ENCODE measurements at regions of chrX and their contacts with region 1.

Region 1: DNA sequence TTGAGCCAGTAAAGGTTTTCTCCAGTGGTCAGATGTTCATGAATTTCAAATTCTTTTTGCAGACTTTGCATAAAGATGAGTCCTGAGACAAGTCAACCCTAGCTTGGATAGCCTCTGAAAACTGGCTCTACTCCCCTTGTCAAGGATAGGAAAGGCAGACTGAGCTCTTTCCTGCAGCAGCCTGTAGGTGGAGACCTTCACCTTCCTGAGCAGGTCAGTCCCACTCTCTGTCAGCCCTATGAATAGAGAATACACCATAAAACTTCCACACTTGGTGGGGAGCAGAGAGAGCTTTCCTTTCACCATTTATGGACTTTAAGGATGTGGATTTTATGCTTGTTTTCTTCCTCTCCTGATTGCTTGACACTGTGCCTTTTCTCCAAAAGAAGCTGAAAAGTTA is 41.9 kb downstream of the PCDH19 start:
- DNase-seq: no peak
- H3K4me3 ChIP-seq: no peak overlapping the region
- H3K27ac ChIP-seq: no peak overlapping the region
- H3K4me1 ChIP-seq: no peaks in the 10 kb centered on the region
- H3K27me3 ChIP-seq: no peaks in the 10 kb centered on the region
- CTCF ChIP-seq: peak in 1 of 6 experiments; percentile 15
- POLR2A ChIP-seq: no peak

Region 2: GRCh38 chrX:99833821-99834220 is 534.3 kb before region 1 on chrX:
- intact Hi-C with region 1: no loop called
- DNase-seq: no peak
- H3K4me3 ChIP-seq: no peak overlapping the region
- H3K27ac ChIP-seq: no peak overlapping the region
- H3K4me1 ChIP-seq: no peaks in the 10 kb centered on the region
- H3K27me3 ChIP-seq: no peaks in the 10 kb centered on the region
- CTCF ChIP-seq: no peak
- POLR2A ChIP-seq: no peak

Region 3: DNA sequence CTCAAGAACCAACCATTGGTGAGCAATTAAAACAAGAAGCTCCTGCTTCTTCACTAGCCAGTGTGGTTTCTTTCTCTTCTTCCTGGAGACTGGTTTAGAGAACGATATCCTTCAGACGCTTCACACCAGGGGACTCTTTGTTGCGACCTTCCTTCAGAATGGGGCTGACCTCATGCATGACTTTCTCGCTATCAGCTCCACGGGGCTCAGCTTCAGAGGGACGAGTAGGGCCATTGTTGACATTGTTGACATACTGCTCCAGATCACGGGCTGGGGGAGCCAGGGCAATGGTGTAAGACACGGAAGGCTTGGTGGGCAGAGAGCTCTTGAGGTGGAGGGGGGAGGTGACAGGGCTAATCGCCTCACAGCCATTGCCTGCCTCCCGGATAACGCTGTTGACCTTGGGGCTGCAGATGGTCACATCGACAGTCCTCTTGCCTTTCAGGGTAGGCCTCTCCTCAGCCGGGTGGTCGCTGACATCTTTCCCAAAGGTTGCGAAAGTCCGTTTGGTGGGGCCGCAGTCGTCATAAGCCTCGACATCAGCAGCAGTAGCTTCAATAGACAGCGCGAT is 71.9 kb before region 1 on chrX:
- intact Hi-C with region 1: loop called (anchors 10 kb)
- DNase-seq: no peak
- H3K4me3 ChIP-seq: no peak overlapping the region
- H3K27ac ChIP-seq: no peak overlapping the region
- H3K4me1 ChIP-seq: no peaks in the 10 kb centered on the region
- H3K27me3 ChIP-seq: no peaks in the 10 kb centered on the region
- CTCF ChIP-seq: no peak
- POLR2A ChIP-seq: no peak

Region 4: GRCh38 chrX:100819534-100819836 is 451.3 kb after region 1 on chrX:
- intact Hi-C with region 1: no loop called
- DNase-seq: no peak
- H3K4me3 ChIP-seq: peak overlapping the region in 1 of 3 donors; percentile 35
- H3K27ac ChIP-seq: no peak overlapping the region
- H3K4me1 ChIP-seq: peaks cover 0 to 4% of the 10 kb centered on the region in 2 donors
- H3K27me3 ChIP-seq: no peaks in the 10 kb centered on the region
- CTCF ChIP-seq: no peak
- POLR2A ChIP-seq: no peak